ENCODE measurements at regions of chr3 and their contacts with region 1.

Region 1: GRCh38 chr3:119145500-119146191 is at the start of gene TEX55:
- DNase-seq: peak; percentile 51 to 58
- H3K4me3 ChIP-seq: no peak within 1 kb of the TSS
- H3K4me3 Mint-ChIP-seq: no peak within 1 kb of the TSS
- H3K27ac Mint-ChIP-seq: no peak within 1 kb of the TSS
- H3K4me1 ChIP-seq: peaks cover 10% of the 10 kb centered on the region; the same call in 1 of the 2 replicates
- H3K4me1 Mint-ChIP-seq: peaks cover 6% of the 10 kb centered on the region
- H3K27me3 ChIP-seq: no peaks in the 10 kb centered on the region
- H3K27me3 Mint-ChIP-seq: no peaks in the 10 kb centered on the region
- CTCF ChIP-seq: peak; percentile 62 to 74
- total RNA-seq, gene TEX55: not detected in 2 replicates

Region 2: GRCh38 chr3:119173325-119173724 is 27.7 kb after region 1 on chr3 and contains the start of gene UPK1B:
- CTCF ChIA-PET with region 1: no interaction called
- POLR2A ChIA-PET with region 1: no interaction called
- intact Hi-C with region 1: no loop called
- DNase-seq: no peak
- H3K4me3 ChIP-seq: no peak within 1 kb of the TSS
- H3K4me3 Mint-ChIP-seq: no peak within 1 kb of the TSS
- H3K27ac Mint-ChIP-seq: no peak within 1 kb of the TSS
- H3K4me1 ChIP-seq: peaks cover 19% of the 10 kb centered on the region; the same call in 1 of the 2 replicates
- H3K4me1 Mint-ChIP-seq: peaks cover 10% of the 10 kb centered on the region
- H3K27me3 ChIP-seq: no peaks in the 10 kb centered on the region
- H3K27me3 Mint-ChIP-seq: no peaks in the 10 kb centered on the region
- CTCF ChIP-seq: no peak
- total RNA-seq, gene UPK1B: 0.46 and 0.50 TPM in 2 replicates

Region 3: DNA sequence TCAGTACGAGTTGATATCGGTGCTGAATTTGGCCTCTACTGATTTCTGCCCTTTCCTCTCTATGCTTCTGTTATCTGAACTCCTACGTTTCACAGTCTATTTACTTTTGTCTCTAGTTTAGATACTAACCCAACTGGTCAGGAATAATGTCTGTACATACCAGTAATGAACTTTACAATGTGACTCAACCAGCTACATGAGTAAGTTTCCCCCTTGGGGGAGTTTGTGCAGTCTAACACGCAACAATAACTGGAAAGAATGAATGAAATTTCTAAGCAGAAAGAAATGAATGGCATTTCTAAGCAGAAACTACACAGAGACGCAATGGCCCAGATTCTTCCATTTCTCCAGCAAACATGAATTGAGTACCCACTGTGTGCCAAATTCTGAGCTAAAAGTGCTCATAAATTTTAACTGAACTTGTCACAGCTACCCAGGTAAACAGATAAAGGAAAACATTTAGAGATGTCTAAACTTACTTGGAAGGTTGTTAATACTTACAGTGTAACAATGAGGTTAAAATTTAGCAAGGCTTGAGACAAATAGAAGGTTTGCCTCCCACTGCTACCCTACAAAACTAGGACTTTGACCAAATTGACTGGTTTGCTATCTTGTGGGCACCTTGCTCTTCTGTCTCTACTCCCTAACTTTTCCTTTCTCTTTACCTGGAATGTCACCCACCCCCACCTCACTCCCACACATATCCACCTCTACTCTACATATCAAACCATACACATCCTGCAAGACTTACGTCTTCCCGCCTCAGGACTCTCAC is 39.3 kb after region 1 on chr3:
- CTCF ChIA-PET with region 1: no interaction called
- POLR2A ChIA-PET with region 1: no interaction called
- intact Hi-C with region 1: loop called (anchors 1 kb)
- DNase-seq: peak; percentile 58 to 62
- H3K4me3 ChIP-seq: no peak overlapping the region
- H3K4me3 Mint-ChIP-seq: peak overlapping the region; percentile 14
- H3K27ac Mint-ChIP-seq: peak overlapping the region; percentile 49
- H3K4me1 ChIP-seq: peaks cover 65% of the 10 kb centered on the region
- H3K4me1 Mint-ChIP-seq: peaks cover 38% of the 10 kb centered on the region
- H3K27me3 ChIP-seq: no peaks in the 10 kb centered on the region
- H3K27me3 Mint-ChIP-seq: no peaks in the 10 kb centered on the region
- CTCF ChIP-seq: no peak

Region 4: GRCh38 chr3:119352849-119353502 is 207.3 kb after region 1 on chr3:
- CTCF ChIA-PET with region 1: no interaction called
- POLR2A ChIA-PET with region 1: no interaction called
- intact Hi-C with region 1: loop called (anchors 1 kb)
- DNase-seq: peak in 1 of 2 experiments; percentile 43
- H3K4me3 ChIP-seq: no peak overlapping the region
- H3K4me3 Mint-ChIP-seq: peak overlapping the region; percentile 28
- H3K27ac Mint-ChIP-seq: peak overlapping the region; percentile 84
- H3K4me1 ChIP-seq: peaks cover 57% of the 10 kb centered on the region
- H3K4me1 Mint-ChIP-seq: peaks cover 48% of the 10 kb centered on the region
- H3K27me3 ChIP-seq: no peaks in the 10 kb centered on the region
- H3K27me3 Mint-ChIP-seq: no peaks in the 10 kb centered on the region
- CTCF ChIP-seq: peak; percentile 12 to 38

Measured in Caco-2 (cell line).